ENCODE measurements at regions of chr4 and their contacts with region 1.

Region 1: GRCh38 chr4:119314356-119314755 is 7.6 kb downstream of the FABP2 start:
- DNase-seq: peak in 4 of 5 donors; percentile 33 to 46 (median 40)
- H3K4me3 ChIP-seq: no peak overlapping the region
- H3K4me3 Mint-ChIP-seq: no peak overlapping the region
- H3K27ac ChIP-seq: no peak overlapping the region
- H3K27ac Mint-ChIP-seq: no peak overlapping the region
- H3K4me1 ChIP-seq: no peaks in the 10 kb centered on the region
- H3K4me1 Mint-ChIP-seq: no peaks in the 10 kb centered on the region
- H3K27me3 ChIP-seq: no peaks in the 10 kb centered on the region
- H3K27me3 Mint-ChIP-seq: peaks cover 7 to 9% of the 10 kb centered on the region in 2 donors

Region 2: GRCh38 chr4:119244832-119245231 is 69.5 kb before region 1 on chr4:
- CTCF ChIA-PET with region 1: no interaction called
- POLR2A ChIA-PET with region 1: no interaction called
- intact Hi-C with region 1: no loop called
- DNase-seq: no peak
- H3K4me3 ChIP-seq: no peak overlapping the region
- H3K4me3 Mint-ChIP-seq: no peak overlapping the region
- H3K27ac ChIP-seq: no peak overlapping the region
- H3K27ac Mint-ChIP-seq: peak overlapping the region in 2 of 7 donors; percentile 5 to 50
- H3K4me1 ChIP-seq: no peaks in the 10 kb centered on the region
- H3K4me1 Mint-ChIP-seq: peaks cover 0 to 11% (median 0%) of the 10 kb centered on the region in 4 donors
- H3K27me3 ChIP-seq: no peaks in the 10 kb centered on the region
- H3K27me3 Mint-ChIP-seq: no peaks in the 10 kb centered on the region

Region 3: GRCh38 chr4:119286377-119287002 is 27.9 kb before region 1 on chr4:
- CTCF ChIA-PET with region 1: no interaction called
- POLR2A ChIA-PET with region 1: no interaction called
- intact Hi-C with region 1: no loop called
- DNase-seq: peak in 4 of 5 donors; percentile 35 to 50 (median 48)
- H3K4me3 ChIP-seq: no peak overlapping the region
- H3K4me3 Mint-ChIP-seq: no peak overlapping the region
- H3K27ac ChIP-seq: no peak overlapping the region
- H3K27ac Mint-ChIP-seq: peak overlapping the region in 1 of 7 donors; percentile 22
- H3K4me1 ChIP-seq: peaks cover 19% of the 10 kb centered on the region
- H3K4me1 Mint-ChIP-seq: peaks cover 18 to 24% (median 22%) of the 10 kb centered on the region in 4 donors
- H3K27me3 ChIP-seq: no peaks in the 10 kb centered on the region
- H3K27me3 Mint-ChIP-seq: no peaks in the 10 kb centered on the region

Region 4: GRCh38 chr4:119490335-119490734 is 176.0 kb after region 1 on chr4:
- CTCF ChIA-PET with region 1: interaction called, 9 read pairs
- POLR2A ChIA-PET with region 1: no interaction called
- intact Hi-C with region 1: loop called (anchors 1 kb)
- DNase-seq: no peak
- H3K4me3 ChIP-seq: no peak overlapping the region
- H3K4me3 Mint-ChIP-seq: no peak overlapping the region
- H3K27ac ChIP-seq: no peak overlapping the region
- H3K27ac Mint-ChIP-seq: no peak overlapping the region
- H3K4me1 ChIP-seq: no peaks in the 10 kb centered on the region
- H3K4me1 Mint-ChIP-seq: no peaks in the 10 kb centered on the region
- H3K27me3 ChIP-seq: no peaks in the 10 kb centered on the region
- H3K27me3 Mint-ChIP-seq: no peaks in the 10 kb centered on the region

Measured in CD4-positive, alpha-beta memory T cell (primary cell).